Activated CD4-positive, alpha-beta memory T cell treated with anti-CD3 and anti-CD28 coated beads for 36 hours (primary cell): ENCODE measurements at regions of chr21 and their contacts with region 1.

Region 1: DNA sequence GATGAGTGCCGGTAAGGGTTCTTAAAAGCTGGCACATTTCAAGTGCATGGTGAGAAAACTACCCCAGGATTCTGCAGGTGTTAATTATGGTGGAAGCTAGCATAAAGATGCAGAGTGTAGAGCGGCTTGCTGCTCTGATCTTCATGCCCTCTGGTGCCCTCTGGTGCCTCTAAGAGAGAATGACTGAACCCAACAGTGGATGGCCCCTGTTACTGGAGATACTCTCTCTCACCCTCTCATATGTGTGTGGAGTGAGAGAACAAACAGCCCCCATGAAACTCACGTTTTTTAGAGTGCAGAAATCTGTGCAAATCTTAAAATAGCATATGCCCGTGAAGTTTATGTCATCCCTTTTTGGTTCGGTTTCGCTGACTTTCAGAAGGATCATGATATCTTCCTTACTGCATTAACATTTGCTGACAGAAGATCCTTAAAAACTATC is 90.0 kb downstream of the GRIK1 start:
- DNase-seq: peak; percentile 49
- H3K4me3 Mint-ChIP-seq: no peak overlapping the region
- H3K27ac Mint-ChIP-seq: no peak overlapping the region
- H3K4me1 Mint-ChIP-seq: no peaks in the 10 kb centered on the region
- H3K27me3 Mint-ChIP-seq: peaks cover 3% of the 10 kb centered on the region

Region 2: DNA sequence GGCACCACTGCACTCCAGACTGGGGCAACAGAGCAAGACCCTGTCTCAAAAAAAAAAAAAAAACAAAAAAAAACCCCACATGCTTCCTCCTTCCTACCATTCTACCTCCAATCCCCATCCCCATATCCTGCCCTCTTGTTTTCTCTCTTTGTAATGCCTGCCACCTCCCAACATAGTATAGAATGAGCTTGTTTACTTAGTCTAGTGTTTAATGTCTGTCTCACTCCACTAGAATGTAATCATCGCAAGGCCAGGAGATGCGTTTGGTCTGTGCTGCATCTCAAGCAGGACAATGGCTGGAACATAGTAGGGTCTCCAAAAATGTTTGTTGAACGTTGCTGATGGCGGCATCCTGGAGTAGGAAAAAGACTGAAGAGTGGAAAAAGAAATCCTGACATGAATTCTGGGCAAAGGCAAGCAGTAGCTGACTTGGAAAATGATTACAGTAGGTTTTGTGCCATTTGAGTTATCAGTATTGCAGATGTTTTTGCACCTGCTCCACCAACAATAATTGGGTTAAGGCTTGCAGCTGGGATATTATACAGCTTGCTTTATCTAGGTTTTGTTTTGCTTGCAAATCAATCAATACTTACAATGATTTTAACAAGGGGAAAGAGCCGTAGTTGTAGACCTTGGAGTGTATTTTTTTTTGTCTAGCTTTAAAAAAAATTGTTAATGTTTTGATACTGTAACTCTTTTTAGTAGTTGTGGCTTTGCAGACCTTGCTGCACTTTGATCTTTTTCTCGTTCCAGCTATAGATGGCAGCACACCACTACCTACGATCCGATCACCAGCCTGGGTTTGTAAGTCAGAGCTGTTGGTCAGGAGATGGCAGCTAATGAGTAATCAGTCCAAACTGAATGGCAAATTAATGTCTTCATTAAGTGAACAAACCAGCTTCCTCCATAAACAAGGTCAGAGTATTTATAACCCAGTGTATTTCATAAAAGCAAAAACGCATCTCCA is 488.7 kb before region 1 on chr21:
- CTCF ChIA-PET with region 1: interaction called, 10 read pairs
- POLR2A ChIA-PET with region 1: no interaction called
- intact Hi-C with region 1: loop called (anchors 1 kb)
- DNase-seq: peak; percentile 24
- H3K4me3 Mint-ChIP-seq: no peak overlapping the region
- H3K27ac Mint-ChIP-seq: no peak overlapping the region
- H3K4me1 Mint-ChIP-seq: peaks cover 5% of the 10 kb centered on the region
- H3K27me3 Mint-ChIP-seq: no peaks in the 10 kb centered on the region

Region 3: DNA sequence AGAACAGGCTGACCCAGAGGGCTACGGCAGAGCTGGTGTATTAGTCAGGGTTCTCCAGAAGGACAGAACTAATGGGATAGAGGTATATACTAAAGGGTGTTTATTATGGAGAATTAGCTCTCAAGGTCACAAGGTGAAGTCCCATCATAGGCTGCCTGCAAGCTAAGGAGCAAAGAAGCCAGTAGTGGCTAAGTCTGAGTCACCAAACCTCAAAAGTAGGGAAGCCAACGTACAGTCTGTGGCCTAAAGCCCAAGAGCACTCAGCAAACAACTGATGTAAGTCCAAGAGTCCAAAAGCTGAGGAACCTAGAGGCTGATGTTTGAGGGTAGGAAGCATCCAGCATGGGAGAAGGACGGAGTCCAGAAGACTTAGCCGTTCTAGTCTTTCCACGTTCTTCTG is 371.8 kb before region 1 on chr21:
- CTCF ChIA-PET with region 1: interaction called, 37 read pairs
- POLR2A ChIA-PET with region 1: no interaction called
- intact Hi-C with region 1: loop called (anchors 1 kb)
- DNase-seq: no peak
- H3K4me3 Mint-ChIP-seq: no peak overlapping the region
- H3K27ac Mint-ChIP-seq: no peak overlapping the region
- H3K4me1 Mint-ChIP-seq: peaks cover 4% of the 10 kb centered on the region
- H3K27me3 Mint-ChIP-seq: no peaks in the 10 kb centered on the region

Region 4: GRCh38 chr21:31248601-31249000 is 1398.8 kb after region 1 on chr21:
- CTCF ChIA-PET with region 1: no interaction called
- POLR2A ChIA-PET with region 1: no interaction called
- intact Hi-C with region 1: no loop called
- DNase-seq: no peak
- H3K4me3 Mint-ChIP-seq: no peak overlapping the region
- H3K27ac Mint-ChIP-seq: no peak overlapping the region
- H3K4me1 Mint-ChIP-seq: no peaks in the 10 kb centered on the region
- H3K27me3 Mint-ChIP-seq: no peaks in the 10 kb centered on the region